ENCODE measurements at regions of chr5 and their contacts with region 1.

Region 1: DNA sequence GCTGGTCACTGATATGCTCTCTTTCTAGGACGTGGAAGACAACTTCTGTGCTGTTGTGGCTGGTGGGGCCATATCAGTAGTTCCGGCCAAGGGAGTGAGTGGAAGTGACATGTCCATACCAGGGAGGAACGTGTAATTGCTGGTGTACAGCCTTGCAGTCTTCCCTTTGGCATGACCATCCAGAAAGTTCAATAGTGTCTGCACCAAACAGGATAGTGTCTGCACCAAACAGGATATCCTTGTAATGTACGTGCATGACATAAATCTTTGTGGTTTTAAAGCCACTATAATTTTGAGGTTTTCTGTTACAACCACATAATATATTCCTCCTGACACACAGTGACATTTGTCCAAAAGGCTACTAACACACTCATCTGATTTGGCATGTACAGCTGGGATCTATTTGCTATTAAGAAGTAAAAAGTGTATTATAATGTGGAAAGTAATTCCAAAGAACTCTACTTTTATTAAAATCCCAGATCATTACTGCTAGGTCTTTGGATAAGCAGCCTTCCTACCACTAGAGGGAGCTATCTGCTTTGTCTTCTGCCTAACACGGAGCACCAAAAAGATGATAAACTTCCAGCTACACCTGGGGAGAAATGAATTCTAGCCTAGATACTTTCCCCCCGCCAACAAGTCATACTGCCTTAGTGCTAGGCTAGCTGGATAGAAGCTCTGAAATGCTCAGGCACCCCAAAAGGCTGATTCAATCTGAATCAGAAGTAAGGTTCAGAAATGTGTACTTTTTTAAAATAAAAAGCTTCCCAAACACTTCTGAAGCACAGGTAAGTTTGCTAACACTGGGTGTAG is 52.7 kb downstream of the RNF145 start:
- DNase-seq: peak in 2 of 5 donors; percentile 15 to 37
- H3K4me3 ChIP-seq: no peak overlapping the region
- H3K27ac ChIP-seq: no peak overlapping the region
- H3K4me1 ChIP-seq: no peaks in the 10 kb centered on the region
- H3K27me3 ChIP-seq: no peaks in the 10 kb centered on the region
- CTCF ChIP-seq: peak; percentile 76 to 79 (median 79)
- EP300 ChIP-seq: no peak
- POLR2A ChIP-seq: no peak

Region 2: GRCh38 chr5:159083548-159084452 is 72.8 kb before region 1 on chr5:
- intact Hi-C with region 1: no loop called
- DNase-seq: no peak
- H3K4me3 ChIP-seq: no peak overlapping the region
- H3K27ac ChIP-seq: no peak overlapping the region
- H3K4me1 ChIP-seq: peaks cover 1% of the 10 kb centered on the region
- H3K27me3 ChIP-seq: no peaks in the 10 kb centered on the region
- CTCF ChIP-seq: no peak
- EP300 ChIP-seq: no peak
- POLR2A ChIP-seq: no peak

Region 3: GRCh38 chr5:159209438-159210305 is 53.0 kb after region 1 on chr5 and contains the start of gene RNF145:
- intact Hi-C with region 1: loop called in 1 of 4 experiments (anchors 10 kb)
- DNase-seq: peak; percentile 82 to 92 (median 90)
- H3K4me3 ChIP-seq: peak within 1 kb of the TSS; percentile 84
- H3K27ac ChIP-seq: peak within 1 kb of the TSS; percentile 18 to 93
- H3K4me1 ChIP-seq: no peaks in the 10 kb centered on the region
- H3K27me3 ChIP-seq: no peaks in the 10 kb centered on the region
- CTCF ChIP-seq: no peak
- EP300 ChIP-seq: no peak
- POLR2A ChIP-seq: no peak
- total RNA-seq, gene RNF145: 42.0 to 66.4 (median 53.4) TPM

Region 4: GRCh38 chr5:159257629-159258283 is 101.1 kb after region 1 on chr5:
- intact Hi-C with region 1: loop called in 1 of 4 experiments (anchors 10 kb)
- DNase-seq: no peak
- H3K4me3 ChIP-seq: no peak overlapping the region
- H3K27ac ChIP-seq: no peak overlapping the region
- H3K4me1 ChIP-seq: no peaks in the 10 kb centered on the region
- H3K27me3 ChIP-seq: no peaks in the 10 kb centered on the region
- CTCF ChIP-seq: no peak
- EP300 ChIP-seq: no peak
- POLR2A ChIP-seq: no peak

Region 5: GRCh38 chr5:159430361-159431012 is 273.9 kb after region 1 on chr5:
- intact Hi-C with region 1: loop called in 1 of 4 experiments (anchors 10 kb)
- DNase-seq: no peak
- H3K4me3 ChIP-seq: no peak overlapping the region
- H3K27ac ChIP-seq: no peak overlapping the region
- H3K4me1 ChIP-seq: peaks cover 1% of the 10 kb centered on the region
- H3K27me3 ChIP-seq: no peaks in the 10 kb centered on the region
- CTCF ChIP-seq: no peak
- EP300 ChIP-seq: no peak
- POLR2A ChIP-seq: no peak